ENCODE measurements at regions of chr11 and their contacts with region 1.

Region 1: GRCh38 chr11:32090545-32091373 is at the start of gene RCN1:
- DNase-seq: peak; percentile 66 to 74
- ATAC-seq: peak; percentile 86 to 95 (median 90)
- H3K4me3 ChIP-seq: peak within 1 kb of the TSS; percentile 58 to 94 (median 79)
- H3K27ac ChIP-seq: peak within 1 kb of the TSS; percentile 49 to 96 (median 90)
- H3K4me1 ChIP-seq: peaks cover 5 to 54% (median 37%) of the 10 kb centered on the region in 9 donors
- H3K27me3 ChIP-seq: no peaks in the 10 kb centered on the region
- CTCF ChIP-seq: peak in 1 of 9 donors; percentile 3
- total RNA-seq, gene RCN1: 9.7 to 60.4 (median 19.2) TPM

Region 2: DNA sequence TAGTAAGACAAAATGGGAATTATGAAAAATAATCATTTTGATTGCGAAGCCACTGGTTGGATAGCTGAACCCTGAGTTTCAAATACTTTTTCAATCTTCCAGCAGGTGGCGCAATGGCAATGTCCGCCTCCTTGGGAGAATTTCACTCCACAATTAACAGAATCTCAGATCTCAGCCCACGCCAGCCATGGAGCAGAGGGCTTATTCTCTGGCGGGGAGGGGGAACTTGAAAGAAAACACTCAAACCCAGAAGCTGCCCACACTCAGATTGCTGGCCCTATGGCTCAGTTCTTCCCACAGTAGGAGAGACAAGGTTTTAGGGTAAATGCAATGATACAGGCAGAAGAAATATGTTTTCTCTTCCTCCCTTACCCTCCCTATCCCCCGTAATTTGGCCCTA is 38.5 kb before region 1 on chr11:
- intact Hi-C with region 1: loop called in 1 of 10 experiments (anchors 5 kb)
- DNase-seq: peak; percentile 27 to 60
- ATAC-seq: peak in 5 of 8 donors; percentile 41 to 63 (median 58)
- H3K4me3 ChIP-seq: no peak overlapping the region
- H3K27ac ChIP-seq: no peak overlapping the region
- H3K4me1 ChIP-seq: peaks cover 0 to 5% (median 0%) of the 10 kb centered on the region in 9 donors
- H3K27me3 ChIP-seq: peaks cover 0 to 19% (median 9%) of the 10 kb centered on the region in 7 donors
- CTCF ChIP-seq: peak; percentile 76 to 90 (median 82)

Region 3: DNA sequence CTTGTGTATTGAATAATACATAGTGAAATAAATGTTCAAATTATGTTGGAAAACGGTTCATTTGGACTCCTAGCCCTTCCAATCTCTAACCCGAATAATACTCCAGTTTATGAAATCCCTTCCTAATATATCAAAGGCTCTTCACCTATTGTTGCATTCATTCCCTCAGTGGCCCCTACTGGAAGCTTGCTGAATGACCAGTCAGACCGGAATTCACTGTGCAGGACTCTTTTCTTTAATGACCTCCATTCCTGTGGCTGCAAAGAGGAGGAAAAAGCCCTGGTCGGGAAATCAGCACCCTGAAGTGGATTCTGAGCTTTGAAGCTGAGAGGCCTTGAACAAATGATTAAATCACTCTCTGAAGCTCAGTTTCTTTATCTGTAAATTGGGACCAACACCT is 18.9 kb before region 1 on chr11:
- intact Hi-C with region 1: no loop called
- DNase-seq: no peak
- ATAC-seq: no peak
- H3K4me3 ChIP-seq: no peak overlapping the region
- H3K27ac ChIP-seq: no peak overlapping the region
- H3K4me1 ChIP-seq: no peaks in the 10 kb centered on the region
- H3K27me3 ChIP-seq: peaks cover 0 to 45% (median 34%) of the 10 kb centered on the region in 7 donors
- CTCF ChIP-seq: peak in 6 of 9 donors; percentile 11 to 34 (median 22)

Region 4: DNA sequence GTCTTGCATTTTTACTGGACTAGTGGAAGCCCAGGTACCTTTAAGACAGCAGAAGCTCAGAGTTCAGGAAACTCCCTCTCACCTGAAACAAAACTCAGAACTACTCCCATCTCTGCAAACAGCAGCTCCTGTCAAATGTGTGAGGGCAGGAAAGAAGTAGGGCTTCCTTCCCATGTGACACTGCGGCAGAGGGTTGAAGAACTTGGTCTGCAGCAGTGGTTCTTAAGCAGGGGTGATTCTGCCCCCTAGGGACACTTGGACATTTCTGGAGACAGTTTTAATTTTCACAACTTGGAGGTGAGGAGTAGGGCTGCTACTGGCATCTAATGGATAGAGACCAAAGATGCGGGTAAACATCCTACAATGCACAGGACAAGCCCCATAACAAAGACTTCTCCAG is 63.5 kb after region 1 on chr11:
- intact Hi-C with region 1: loop called in 1 of 10 experiments (anchors 5 kb)
- DNase-seq: no peak
- ATAC-seq: no peak
- H3K4me3 ChIP-seq: no peak overlapping the region
- H3K27ac ChIP-seq: peak overlapping the region in 1 of 10 donors; percentile 74
- H3K4me1 ChIP-seq: peaks cover 0 to 35% (median 0%) of the 10 kb centered on the region in 9 donors
- H3K27me3 ChIP-seq: peaks cover 0 to 6% (median 0%) of the 10 kb centered on the region in 7 donors
- CTCF ChIP-seq: no peak

Measured in heart right ventricle (tissue), 16 donors.